AG04450 (cell line): ENCODE measurements at regions of chr1 and their contacts with region 1.

Region 1: GRCh38 chr1:198809247-198809646 is 170.4 kb downstream of the PTPRC start:
- DNase-seq: no peak
- H3K4me3 ChIP-seq: no peak overlapping the region
- H3K27ac ChIP-seq: no peak overlapping the region
- H3K27me3 ChIP-seq: no peaks in the 10 kb centered on the region
- CTCF ChIP-seq: no peak

Region 2: GRCh38 chr1:198598796-198599321 is 210.4 kb before region 1 on chr1:
- CTCF ChIA-PET with region 1: no interaction called
- POLR2A ChIA-PET with region 1: no interaction called
- DNase-seq: no peak
- H3K4me3 ChIP-seq: no peak overlapping the region
- H3K27ac ChIP-seq: no peak overlapping the region
- H3K27me3 ChIP-seq: no peaks in the 10 kb centered on the region
- CTCF ChIP-seq: no peak

Region 3: DNA sequence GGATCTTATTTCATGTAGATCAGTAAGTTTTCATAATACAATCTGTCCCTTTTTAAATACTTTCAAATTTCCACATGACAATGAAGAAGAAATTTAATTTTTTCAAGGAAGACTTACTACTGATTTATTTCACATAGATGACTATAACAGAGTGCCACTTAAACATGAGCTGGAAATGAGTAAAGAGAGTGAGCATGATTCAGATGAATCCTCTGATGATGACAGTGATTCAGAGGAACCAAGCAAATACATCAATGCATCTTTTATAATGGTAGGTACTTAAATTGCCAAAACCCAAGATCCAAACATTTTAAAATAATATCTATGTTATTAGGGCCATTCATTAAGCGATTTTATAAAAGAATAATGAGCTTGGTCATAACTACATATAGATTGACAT is 60.0 kb before region 1 on chr1:
- CTCF ChIA-PET with region 1: no interaction called
- POLR2A ChIA-PET with region 1: no interaction called
- DNase-seq: no peak
- H3K4me3 ChIP-seq: no peak overlapping the region
- H3K27ac ChIP-seq: no peak overlapping the region
- H3K27me3 ChIP-seq: no peaks in the 10 kb centered on the region
- CTCF ChIP-seq: no peak

Region 4: GRCh38 chr1:199529324-199529723 is 720.1 kb after region 1 on chr1:
- CTCF ChIA-PET with region 1: no interaction called
- POLR2A ChIA-PET with region 1: interaction called, 11 read pairs
- DNase-seq: no peak
- H3K4me3 ChIP-seq: no peak overlapping the region
- H3K27ac ChIP-seq: no peak overlapping the region
- H3K27me3 ChIP-seq: no peaks in the 10 kb centered on the region
- CTCF ChIP-seq: no peak